ENCODE measurements at regions of chr10 and their contacts with region 1.

Region 1: GRCh38 chr10:70880077-70880534 is 8.3 kb downstream of the PCBD1 start:
- DNase-seq: peak; percentile 32
- ATAC-seq: peak; percentile 100
- H3K4me3 ChIP-seq: no peak overlapping the region
- H3K27ac ChIP-seq: no peak overlapping the region
- H3K4me1 ChIP-seq: no peaks in the 10 kb centered on the region
- H3K27me3 ChIP-seq: no peaks in the 10 kb centered on the region
- CTCF ChIP-seq: peak; percentile 85 to 92 (median 89); a peak in 5 of 6 replicates
- EP300 ChIP-seq: no peak
- POLR2A ChIP-seq: no peak
- RAD21 ChIP-seq: peak; percentile 90

Region 2: DNA sequence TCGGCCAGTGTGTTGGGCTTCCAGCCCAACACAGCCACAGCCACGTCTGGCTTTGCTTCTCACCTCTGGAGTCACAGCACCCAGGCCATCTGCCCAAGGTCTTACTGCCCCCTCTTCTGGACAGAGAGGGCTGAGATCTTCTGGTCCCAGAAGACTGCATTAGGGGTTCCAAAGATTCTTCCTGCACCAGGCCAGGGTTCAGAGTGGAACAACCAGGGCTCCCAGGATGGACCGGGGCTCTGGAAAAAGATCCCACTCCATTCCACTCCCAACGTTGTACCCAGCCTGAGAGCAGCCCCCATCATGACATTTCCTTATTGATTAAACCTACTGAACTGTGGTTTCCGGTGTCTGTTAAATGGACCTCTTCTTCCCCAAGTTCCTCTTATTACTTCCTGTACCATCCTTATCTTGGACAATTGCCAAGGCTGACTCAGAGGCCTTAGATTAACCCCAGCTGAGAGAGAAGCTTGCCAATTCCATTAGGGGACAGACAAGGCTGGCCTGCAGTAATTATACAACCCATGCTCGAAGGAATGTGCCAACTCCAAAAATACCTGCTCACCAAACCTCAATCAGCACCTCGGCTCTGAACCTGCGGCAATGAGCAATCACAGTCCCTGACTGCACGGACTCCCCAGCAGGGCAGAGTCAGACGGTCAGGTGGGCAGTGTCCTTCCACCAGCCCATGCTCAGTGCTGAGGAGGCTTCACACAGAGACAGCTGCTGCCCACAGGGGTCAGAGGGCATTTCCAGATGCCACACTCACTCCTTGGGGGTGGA is 548.4 kb before region 1 on chr10:
- CTCF ChIA-PET with region 1: no interaction called
- POLR2A ChIA-PET with region 1: no interaction called
- RAD21 ChIA-PET with region 1: no interaction called
- SMC1A ChIA-PET with region 1: no interaction called
- in situ Hi-C with region 1: no loop called
- intact Hi-C with region 1: no loop called
- DNase-seq: peak; percentile 72
- ATAC-seq: peak; percentile 91
- H3K4me3 ChIP-seq: no peak overlapping the region
- H3K27ac ChIP-seq: peak overlapping the region; percentile 43
- H3K4me1 ChIP-seq: peaks cover 16% of the 10 kb centered on the region
- H3K27me3 ChIP-seq: no peaks in the 10 kb centered on the region
- CTCF ChIP-seq: peak; percentile 14 to 30 (median 27); a peak in 4 of 6 replicates
- EP300 ChIP-seq: no peak
- POLR2A ChIP-seq: no peak
- RAD21 ChIP-seq: peak; percentile 45

Region 3: GRCh38 chr10:70549962-70550458 is 330.1 kb before region 1 on chr10:
- CTCF ChIA-PET with region 1: interaction called, 5 read pairs
- POLR2A ChIA-PET with region 1: no interaction called
- RAD21 ChIA-PET with region 1: interaction called, 3 read pairs
- SMC1A ChIA-PET with region 1: interaction called, 3 read pairs
- in situ Hi-C with region 1: loop called (anchors 5 kb)
- intact Hi-C with region 1: loop called (anchors 1 kb)
- DNase-seq: peak; percentile 17
- ATAC-seq: peak; percentile 97
- H3K4me3 ChIP-seq: no peak overlapping the region
- H3K27ac ChIP-seq: no peak overlapping the region
- H3K4me1 ChIP-seq: no peaks in the 10 kb centered on the region
- H3K27me3 ChIP-seq: no peaks in the 10 kb centered on the region
- CTCF ChIP-seq: peak; percentile 87 to 91 (median 91)
- EP300 ChIP-seq: no peak
- POLR2A ChIP-seq: no peak
- RAD21 ChIP-seq: peak; percentile 99